ENCODE measurements at regions of chr11 and their contacts with region 1.

Region 1: DNA sequence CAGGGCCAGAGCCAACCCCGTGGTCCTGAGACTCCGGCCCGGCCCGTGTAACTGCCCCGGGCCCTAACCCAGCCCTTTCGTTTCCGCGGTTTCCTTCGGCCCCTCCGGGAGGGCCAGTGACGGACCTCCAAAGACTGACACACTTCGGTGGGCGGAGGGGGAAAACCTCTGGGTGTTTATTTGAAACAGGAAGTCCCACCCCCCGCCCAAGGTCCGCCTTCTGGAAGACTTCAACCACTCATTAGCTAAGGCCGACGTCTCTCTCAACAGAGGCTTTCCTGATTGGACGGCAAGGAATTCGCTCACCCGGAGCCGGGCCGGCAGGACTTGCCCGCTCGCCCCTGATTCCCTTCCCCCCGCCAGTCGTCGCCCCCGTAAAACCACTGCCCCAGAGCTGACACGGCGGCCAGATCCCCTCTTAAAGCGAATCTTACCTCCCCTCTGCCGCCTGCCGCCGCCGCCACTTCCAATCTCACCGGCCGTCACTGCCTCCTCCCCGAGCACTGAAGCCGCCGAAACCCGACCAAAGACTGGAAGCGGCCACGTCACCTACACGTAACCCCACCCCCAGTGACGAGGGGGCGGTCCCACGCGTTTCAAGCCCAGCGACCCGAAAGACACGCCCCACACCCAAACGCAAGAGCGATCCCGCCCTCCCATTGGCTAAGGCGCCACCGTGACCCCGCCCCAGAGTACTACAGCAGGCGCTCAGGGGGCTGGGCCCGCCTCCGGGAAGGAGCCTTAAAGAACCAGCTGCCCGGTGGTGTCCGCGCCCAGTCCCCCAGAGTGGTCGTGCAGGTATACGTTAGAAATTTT is at the start of gene STX5:
- DNase-seq: peak; percentile 98
- ATAC-seq: peak; percentile 91
- H3K4me3 Mint-ChIP-seq: peak within 1 kb of the TSS; percentile 100
- H3K27ac Mint-ChIP-seq: peak within 1 kb of the TSS; percentile 100
- H3K4me1 Mint-ChIP-seq: peaks cover 47% of the 10 kb centered on the region
- H3K27me3 Mint-ChIP-seq: no peaks in the 10 kb centered on the region
- CTCF ChIP-seq: no peak
- total RNA-seq, gene STX5: 58.4 and 71.5 TPM in 2 replicates

Region 2: GRCh38 chr11:62652161-62653006 is 179.3 kb before region 1 on chr11:
- CTCF ChIA-PET with region 1: no interaction called
- POLR2A ChIA-PET with region 1: interaction called, 11 read pairs
- intact Hi-C with region 1: no loop called
- DNase-seq: no peak
- ATAC-seq: no peak
- H3K4me3 Mint-ChIP-seq: peak overlapping the region; percentile 90
- H3K27ac Mint-ChIP-seq: peak overlapping the region; percentile 90
- H3K4me1 Mint-ChIP-seq: peaks cover 28% of the 10 kb centered on the region
- H3K27me3 Mint-ChIP-seq: no peaks in the 10 kb centered on the region
- CTCF ChIP-seq: no peak

Region 3: DNA sequence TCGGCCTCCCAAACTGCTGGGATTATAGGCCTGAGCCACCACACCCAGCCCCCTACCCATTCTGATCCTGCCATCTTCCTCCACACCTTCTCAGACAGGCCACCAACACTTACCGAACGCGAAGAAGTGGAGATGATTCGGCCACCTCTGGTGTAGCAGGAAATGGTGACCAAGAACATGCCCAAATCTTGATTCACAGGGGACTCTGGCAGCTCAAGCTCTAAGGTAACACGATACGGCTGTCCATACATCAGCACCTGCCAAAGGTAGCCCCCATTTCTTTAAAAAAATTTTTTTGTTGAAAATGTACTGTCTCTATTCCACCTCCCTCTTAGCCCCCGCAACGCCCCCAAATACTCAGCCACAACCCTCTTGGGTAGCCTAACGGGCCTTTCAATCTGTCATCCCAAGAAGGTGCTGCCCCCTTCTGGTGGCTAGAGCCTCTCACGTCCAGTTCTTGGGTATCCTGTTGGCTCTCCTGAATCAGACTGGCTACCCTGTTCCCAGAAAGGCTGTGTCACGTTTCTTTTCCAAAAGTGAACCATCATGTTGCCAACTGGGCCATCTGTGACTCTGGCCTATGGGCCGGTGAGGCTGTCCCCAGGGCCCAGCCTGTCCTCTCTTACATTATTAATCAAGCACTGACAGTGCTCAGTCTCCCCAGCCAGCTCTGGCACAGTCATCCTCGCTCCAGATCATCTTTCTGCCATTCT is 137.1 kb before region 1 on chr11:
- CTCF ChIA-PET with region 1: no interaction called
- POLR2A ChIA-PET with region 1: no interaction called
- intact Hi-C with region 1: no loop called
- DNase-seq: peak; percentile 55
- ATAC-seq: peak; percentile 88
- H3K4me3 Mint-ChIP-seq: no peak overlapping the region
- H3K27ac Mint-ChIP-seq: no peak overlapping the region
- H3K4me1 Mint-ChIP-seq: peaks cover 5% of the 10 kb centered on the region
- H3K27me3 Mint-ChIP-seq: no peaks in the 10 kb centered on the region
- CTCF ChIP-seq: no peak

Region 4: GRCh38 chr11:62787005-62787759 is 44.5 kb before region 1 on chr11 and contains the start of gene TMEM179B:
- CTCF ChIA-PET with region 1: interaction called, 11 read pairs
- POLR2A ChIA-PET with region 1: interaction called, 64 read pairs
- intact Hi-C with region 1: loop called (anchors 1 kb)
- DNase-seq: peak; percentile 87
- ATAC-seq: peak; percentile 71
- H3K4me3 Mint-ChIP-seq: peak within 1 kb of the TSS; percentile 92
- H3K27ac Mint-ChIP-seq: peak within 1 kb of the TSS; percentile 89
- H3K4me1 Mint-ChIP-seq: peaks cover 42% of the 10 kb centered on the region
- H3K27me3 Mint-ChIP-seq: no peaks in the 10 kb centered on the region
- CTCF ChIP-seq: peak; percentile 66
- total RNA-seq, gene TMEM179B: 34.9 and 47.7 TPM in 2 replicates

Region 5: DNA sequence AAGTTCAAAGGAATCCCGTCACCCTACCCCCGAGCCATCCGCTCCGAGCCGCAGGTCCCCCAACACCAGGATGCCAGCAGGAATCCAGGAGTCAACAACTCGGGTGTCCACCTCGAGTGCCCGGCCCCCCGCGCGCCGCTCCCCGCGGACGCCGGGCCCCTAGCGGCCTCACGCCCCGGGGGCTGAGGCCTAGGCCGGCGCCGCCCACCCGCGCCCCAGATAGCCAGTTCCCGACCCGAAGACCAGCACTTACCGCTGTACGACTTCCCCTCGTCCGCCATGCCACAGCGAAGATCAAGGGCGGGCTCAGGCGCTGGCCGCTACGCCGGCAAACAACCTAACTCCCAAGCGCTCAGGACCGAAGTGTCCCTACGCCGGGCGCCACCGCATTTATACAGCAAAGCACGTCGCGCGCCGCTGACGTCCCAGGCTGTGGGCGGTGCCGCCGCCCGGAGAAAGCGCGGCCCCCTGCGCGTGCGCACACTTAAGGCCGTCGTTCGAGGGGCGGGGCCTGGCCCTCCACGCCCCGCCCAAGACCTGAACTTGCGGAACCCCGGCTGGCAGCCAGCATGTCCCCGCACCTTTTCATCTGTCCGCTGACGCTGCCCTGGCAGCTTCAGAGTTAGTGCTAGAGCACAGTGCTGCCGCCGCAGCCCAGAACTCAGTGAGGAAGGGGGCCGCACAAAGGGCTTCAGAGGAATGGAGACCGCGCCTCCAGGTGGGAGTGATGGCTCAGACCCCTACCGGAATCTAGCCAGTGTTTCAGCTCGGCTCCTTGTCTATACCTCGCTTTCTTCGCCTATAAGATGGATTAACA is 26.4 kb before region 1 on chr11 and contains the start of gene NXF1:
- CTCF ChIA-PET with region 1: interaction called, 3 read pairs
- POLR2A ChIA-PET with region 1: interaction called, 53 read pairs
- intact Hi-C with region 1: loop called (anchors 1 kb)
- DNase-seq: peak; percentile 99
- ATAC-seq: peak; percentile 86
- H3K4me3 Mint-ChIP-seq: peak within 1 kb of the TSS; percentile 96
- H3K27ac Mint-ChIP-seq: peak within 1 kb of the TSS; percentile 93
- H3K4me1 Mint-ChIP-seq: peaks cover 36% of the 10 kb centered on the region
- H3K27me3 Mint-ChIP-seq: no peaks in the 10 kb centered on the region
- CTCF ChIP-seq: no peak
- total RNA-seq, gene NXF1: 89.1 and 91.6 TPM in 2 replicates